ENCODE measurements at regions of chr3 and their contacts with region 1.

Region 1: DNA sequence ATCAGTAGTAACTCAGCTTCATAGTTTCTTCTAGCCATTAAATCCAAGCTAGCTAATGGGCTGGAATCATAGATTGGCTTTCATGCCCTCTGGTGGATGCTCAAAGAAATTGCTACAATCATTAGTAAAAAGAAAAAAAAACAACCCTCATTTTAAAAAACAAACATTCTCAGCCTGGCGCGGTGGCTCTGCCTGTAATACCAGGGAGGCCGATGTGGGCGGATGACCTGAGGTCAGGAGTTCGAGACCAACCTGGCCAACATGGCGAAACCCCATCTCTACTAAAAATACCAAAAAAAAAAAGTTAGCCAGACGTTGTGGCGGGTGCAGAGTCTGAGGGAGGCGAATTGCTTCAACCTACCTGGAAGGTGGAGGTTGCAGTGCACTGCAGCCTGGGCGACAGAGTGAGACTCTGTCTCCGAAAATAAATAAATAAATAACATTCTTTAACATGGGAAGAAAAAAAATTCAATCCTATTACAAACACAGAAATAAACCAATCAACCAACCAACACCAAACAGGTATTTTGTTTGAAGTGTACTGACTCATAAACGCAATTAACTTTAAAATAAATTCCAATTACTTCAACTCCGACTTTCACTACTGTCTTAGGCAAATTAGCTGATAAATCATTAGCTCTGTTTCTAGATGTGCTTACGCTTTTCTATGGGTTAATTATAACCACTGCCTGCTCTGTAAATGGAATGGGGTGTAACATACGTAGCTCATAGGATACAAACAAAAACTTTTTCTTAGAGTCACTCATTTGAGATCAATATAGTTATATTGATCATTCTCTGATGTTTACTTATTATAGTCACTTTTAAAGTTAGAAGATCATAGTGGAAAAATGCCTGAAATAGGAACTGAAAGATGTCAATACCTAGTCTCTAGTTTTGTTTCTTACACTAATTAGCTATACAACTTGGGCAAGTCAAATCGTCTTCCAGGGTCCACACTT is 24.9 kb downstream of the TMEM207 start:
- DNase-seq: peak; percentile 72
- H3K4me3 Mint-ChIP-seq: no peak overlapping the region
- H3K27ac Mint-ChIP-seq: no peak overlapping the region
- H3K4me1 Mint-ChIP-seq: peaks cover 2% of the 10 kb centered on the region
- H3K27me3 Mint-ChIP-seq: peaks cover 5% of the 10 kb centered on the region

Region 2: GRCh38 chr3:190224863-190225692 is 199.7 kb before region 1 on chr3:
- intact Hi-C with region 1: loop called (anchors 2 kb)
- DNase-seq: no peak
- H3K4me3 Mint-ChIP-seq: no peak overlapping the region
- H3K27ac Mint-ChIP-seq: no peak overlapping the region
- H3K4me1 Mint-ChIP-seq: peaks cover 2% of the 10 kb centered on the region
- H3K27me3 Mint-ChIP-seq: peaks cover 4% of the 10 kb centered on the region

Region 3: DNA sequence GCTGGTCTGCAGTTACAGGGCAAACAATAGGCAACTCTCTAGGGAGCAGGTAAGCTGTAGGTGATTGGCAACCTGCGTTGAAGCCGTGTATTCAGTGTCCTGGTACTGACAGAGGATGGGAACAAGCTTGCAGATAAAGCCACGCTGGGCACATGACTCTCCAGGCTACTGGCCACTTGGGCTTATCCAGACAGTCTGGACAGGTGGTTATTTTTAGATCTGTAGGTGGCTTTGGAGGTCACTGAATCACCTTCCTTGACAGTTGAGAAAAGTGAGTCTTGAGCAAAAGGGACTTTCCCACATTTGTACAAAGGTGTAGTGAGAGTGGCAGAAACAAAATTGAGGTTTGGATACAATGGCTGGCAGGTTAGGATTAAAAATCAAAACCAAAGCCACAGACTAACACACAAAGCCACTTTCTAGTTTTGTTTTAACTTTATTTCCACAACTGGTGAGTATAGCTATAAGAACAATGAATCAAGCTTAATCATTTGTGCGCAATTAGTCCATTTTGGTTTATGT is 66.8 kb after region 1 on chr3:
- intact Hi-C with region 1: loop called (anchors 2 kb)
- DNase-seq: no peak
- H3K4me3 Mint-ChIP-seq: peak overlapping the region; percentile 11
- H3K27ac Mint-ChIP-seq: peak overlapping the region; percentile 12
- H3K4me1 Mint-ChIP-seq: peaks cover 22% of the 10 kb centered on the region
- H3K27me3 Mint-ChIP-seq: peaks cover 69% of the 10 kb centered on the region